B cell (primary cell): ENCODE measurements at regions of chr6 and their contacts with region 1.

Region 1: GRCh38 chr6:32933636-32934085 is 7.2 kb downstream of the HLA-DMB start:
- DNase-seq: peak; percentile 82
- ATAC-seq: peak; percentile 60
- H3K4me3 ChIP-seq: no peak overlapping the region
- H3K4me3 Mint-ChIP-seq: peak overlapping the region; percentile 30
- H3K27ac ChIP-seq: peak overlapping the region; percentile 3 to 98
- H3K27ac Mint-ChIP-seq: peak overlapping the region; percentile 84
- H3K4me1 ChIP-seq: peaks cover 76 to 85% of the 10 kb centered on the region in 2 donors
- H3K4me1 Mint-ChIP-seq: peaks cover 88% of the 10 kb centered on the region
- H3K27me3 ChIP-seq: no peaks in the 10 kb centered on the region
- H3K27me3 Mint-ChIP-seq: no peaks in the 10 kb centered on the region
- CTCF ChIP-seq: peak; percentile 84

Region 2: DNA sequence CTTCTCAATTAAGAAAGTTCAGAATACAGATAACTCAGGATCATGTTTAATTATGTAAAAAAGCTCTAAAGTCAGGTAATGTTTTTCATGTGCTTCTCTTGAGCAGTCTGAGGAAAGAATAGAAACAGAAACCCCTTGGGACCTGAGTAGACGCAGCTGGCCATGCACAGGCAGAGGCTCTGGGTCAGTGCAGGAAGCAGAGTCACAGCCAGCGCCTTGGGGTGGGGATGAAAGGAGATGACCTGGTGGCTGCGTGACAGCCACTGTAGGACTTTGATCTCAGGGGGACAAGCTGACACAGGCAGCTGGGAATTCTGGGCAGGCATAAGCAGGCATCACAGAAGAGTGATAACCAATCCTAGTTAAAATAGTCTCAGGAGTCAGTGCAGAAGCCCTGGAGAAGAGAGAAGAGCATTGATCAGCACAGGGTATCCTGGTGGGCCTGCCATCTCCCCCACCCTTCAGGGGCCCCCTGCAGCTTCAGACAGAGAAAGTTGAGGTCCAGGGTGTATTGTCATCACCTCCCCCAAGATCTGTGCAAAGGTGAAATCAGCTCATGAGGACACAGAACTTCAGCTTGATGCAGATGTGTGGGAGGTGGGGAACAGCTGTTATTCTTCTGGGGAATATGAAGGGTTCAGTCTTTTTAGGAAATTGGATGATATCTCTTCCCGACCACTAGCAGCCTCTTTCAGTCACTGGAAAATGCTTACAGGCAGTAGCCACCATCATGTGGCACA is 273.6 kb before region 1 on chr6:
- CTCF ChIA-PET with region 1: no interaction called
- POLR2A ChIA-PET with region 1: no interaction called
- intact Hi-C with region 1: no loop called
- DNase-seq: peak; percentile 54
- ATAC-seq: peak; percentile 78
- H3K4me3 ChIP-seq: peak overlapping the region in 2 of 5 experiments; percentile 2 to 20
- H3K4me3 Mint-ChIP-seq: peak overlapping the region; percentile 89
- H3K27ac ChIP-seq: peak overlapping the region in 1 of 2 donors; percentile 57
- H3K27ac Mint-ChIP-seq: peak overlapping the region; percentile 100
- H3K4me1 ChIP-seq: peaks cover 34 to 49% of the 10 kb centered on the region in 2 donors
- H3K4me1 Mint-ChIP-seq: peaks cover 66% of the 10 kb centered on the region
- H3K27me3 ChIP-seq: no peaks in the 10 kb centered on the region
- H3K27me3 Mint-ChIP-seq: no peaks in the 10 kb centered on the region
- CTCF ChIP-seq: no peak

Region 3: GRCh38 chr6:32894080-32895005 is 39.3 kb before region 1 on chr6:
- CTCF ChIA-PET with region 1: interaction called, 54 read pairs
- POLR2A ChIA-PET with region 1: interaction called, 8 read pairs
- intact Hi-C with region 1: no loop called
- DNase-seq: peak; percentile 98
- ATAC-seq: peak; percentile 98
- H3K4me3 ChIP-seq: peak overlapping the region; percentile 84 to 96 (median 92)
- H3K4me3 Mint-ChIP-seq: peak overlapping the region; percentile 99
- H3K27ac ChIP-seq: peak overlapping the region; percentile 89 to 90
- H3K27ac Mint-ChIP-seq: peak overlapping the region; percentile 98
- H3K4me1 ChIP-seq: peaks cover 40 to 42% of the 10 kb centered on the region in 2 donors
- H3K4me1 Mint-ChIP-seq: peaks cover 60% of the 10 kb centered on the region
- H3K27me3 ChIP-seq: no peaks in the 10 kb centered on the region
- H3K27me3 Mint-ChIP-seq: no peaks in the 10 kb centered on the region
- CTCF ChIP-seq: no peak

Region 4: DNA sequence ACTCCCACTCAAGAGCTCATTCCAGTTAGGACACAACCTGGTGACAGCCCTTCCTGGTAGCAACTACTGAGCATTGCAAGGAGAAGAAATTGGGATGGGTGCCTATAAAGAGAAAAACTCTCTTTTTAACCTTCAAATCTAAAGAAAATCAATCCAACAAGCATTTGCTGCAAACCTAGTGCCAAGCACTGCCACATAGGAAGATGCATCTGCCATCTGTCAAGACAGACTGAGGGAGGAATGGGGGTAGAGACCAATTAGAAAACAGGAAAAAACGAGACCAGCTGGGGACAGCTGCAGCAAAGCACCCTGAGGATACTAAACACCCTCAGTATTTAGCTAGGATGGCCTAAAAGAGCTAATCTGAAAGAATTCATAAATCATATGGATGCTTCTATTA is 20.7 kb before region 1 on chr6:
- CTCF ChIA-PET with region 1: interaction called, 55 read pairs
- POLR2A ChIA-PET with region 1: interaction called, 3 read pairs
- intact Hi-C with region 1: loop called (anchors 2 kb)
- DNase-seq: no peak
- ATAC-seq: no peak
- H3K4me3 ChIP-seq: no peak overlapping the region
- H3K4me3 Mint-ChIP-seq: no peak overlapping the region
- H3K27ac ChIP-seq: no peak overlapping the region
- H3K27ac Mint-ChIP-seq: no peak overlapping the region
- H3K4me1 ChIP-seq: peaks cover 7 to 22% of the 10 kb centered on the region in 2 donors
- H3K4me1 Mint-ChIP-seq: peaks cover 26% of the 10 kb centered on the region
- H3K27me3 ChIP-seq: no peaks in the 10 kb centered on the region
- H3K27me3 Mint-ChIP-seq: no peaks in the 10 kb centered on the region
- CTCF ChIP-seq: no peak

Region 5: DNA sequence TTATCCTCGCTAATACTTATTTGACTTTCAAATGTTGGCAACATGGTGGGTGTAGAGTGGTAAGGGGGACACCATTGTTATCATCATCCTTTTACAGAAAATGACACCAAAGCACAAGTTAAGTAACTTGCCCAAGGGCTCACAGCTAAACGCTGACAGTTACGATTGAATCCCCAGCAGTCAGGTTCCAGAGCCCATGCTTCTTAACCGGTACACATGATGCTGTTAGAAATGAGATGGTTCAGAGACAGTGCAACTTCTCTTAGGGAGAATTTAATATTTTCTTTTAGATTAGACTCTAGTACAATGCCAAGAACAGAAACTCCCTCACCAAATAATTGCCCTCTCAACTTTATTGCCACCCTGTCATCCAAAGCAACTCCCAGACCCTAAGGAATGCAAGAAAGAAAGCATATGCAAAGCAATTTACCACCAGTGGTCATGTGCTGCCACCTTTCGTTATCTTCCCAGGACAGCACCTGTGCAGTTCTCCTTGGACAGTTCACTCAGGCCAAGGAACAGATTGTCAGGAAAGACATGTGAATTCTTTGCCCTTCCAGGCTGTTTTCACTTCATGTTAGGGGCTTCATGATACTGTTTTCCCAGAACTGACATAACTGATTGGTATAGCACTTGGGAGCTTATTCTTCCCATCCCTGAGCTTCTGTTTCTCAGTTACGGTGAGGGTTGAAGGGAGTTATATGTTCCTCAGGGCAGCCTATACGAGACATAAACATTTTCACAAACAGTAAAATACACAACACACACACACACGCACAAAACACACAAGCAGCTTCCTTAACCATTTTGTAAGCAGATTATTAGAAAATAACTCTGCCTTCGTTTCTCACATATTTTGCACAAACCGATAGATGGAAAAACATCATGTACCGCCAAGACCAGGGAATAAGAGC is 14.1 kb after region 1 on chr6:
- CTCF ChIA-PET with region 1: interaction called, 462 read pairs
- POLR2A ChIA-PET with region 1: interaction called, 131 read pairs
- intact Hi-C with region 1: loop called (anchors 1 kb)
- DNase-seq: peak; percentile 76
- ATAC-seq: no peak
- H3K4me3 ChIP-seq: peak overlapping the region in 3 of 5 experiments; percentile 2 to 35 (median 6)
- H3K4me3 Mint-ChIP-seq: peak overlapping the region; percentile 84
- H3K27ac ChIP-seq: peak overlapping the region; percentile 97 to 98
- H3K27ac Mint-ChIP-seq: peak overlapping the region; percentile 92
- H3K4me1 ChIP-seq: peaks cover 80 to 94% of the 10 kb centered on the region in 2 donors
- H3K4me1 Mint-ChIP-seq: peaks cover 86% of the 10 kb centered on the region
- H3K27me3 ChIP-seq: no peaks in the 10 kb centered on the region
- H3K27me3 Mint-ChIP-seq: no peaks in the 10 kb centered on the region
- CTCF ChIP-seq: peak; percentile 70